Ascending aorta (tissue), 2 donors: ENCODE measurements at regions of chr14 and their contacts with region 1.

Region 1: DNA sequence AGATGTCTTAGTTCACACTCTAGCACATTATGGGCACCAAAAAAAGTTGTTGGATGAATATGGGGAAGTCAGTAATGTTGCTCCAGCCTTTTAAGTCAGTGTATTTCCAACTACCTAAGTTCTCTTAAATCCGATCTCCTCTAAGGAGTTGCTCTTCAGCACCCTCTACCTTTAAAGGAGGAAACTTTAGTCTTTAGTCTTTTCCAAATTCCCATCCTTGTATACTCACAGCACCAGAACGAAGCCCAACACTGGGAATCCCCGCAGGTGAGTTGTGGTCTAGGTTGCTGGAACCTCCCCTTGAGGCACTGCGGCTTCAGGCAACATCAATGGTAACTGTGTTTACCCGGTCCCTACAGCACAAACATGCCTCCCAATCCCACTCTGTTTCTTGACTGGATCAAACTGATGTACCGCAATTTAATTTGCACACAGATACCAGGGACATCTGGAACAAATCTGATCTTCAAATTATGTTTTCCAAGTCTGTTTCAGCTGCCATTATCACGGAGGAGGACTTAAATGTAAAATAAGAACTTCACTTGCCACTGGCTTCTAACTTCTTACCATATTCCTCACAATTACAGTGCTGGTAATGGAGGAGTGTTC is 179.0 kb downstream of the FOXN3 start:
- DNase-seq: no peak
- H3K4me3 ChIP-seq: no peak overlapping the region
- H3K27ac ChIP-seq: peak overlapping the region in 1 of 2 donors; percentile 22
- H3K4me1 ChIP-seq: peaks cover 4 to 19% of the 10 kb centered on the region in 2 donors
- H3K27me3 ChIP-seq: no peaks in the 10 kb centered on the region
- CTCF ChIP-seq: peak; percentile 32 to 56 (median 36)

Region 2: GRCh38 chr14:89198544-89199329 is 39.3 kb before region 1 on chr14:
- intact Hi-C with region 1: no loop called
- DNase-seq: no peak
- H3K4me3 ChIP-seq: no peak overlapping the region
- H3K27ac ChIP-seq: no peak overlapping the region
- H3K4me1 ChIP-seq: peaks cover 0 to 4% of the 10 kb centered on the region in 2 donors
- H3K27me3 ChIP-seq: no peaks in the 10 kb centered on the region
- CTCF ChIP-seq: no peak

Region 3: GRCh38 chr14:89270439-89271227 is 32.6 kb after region 1 on chr14:
- intact Hi-C with region 1: no loop called
- DNase-seq: peak in 1 of 2 donors; percentile 61
- H3K4me3 ChIP-seq: no peak overlapping the region
- H3K27ac ChIP-seq: peak overlapping the region; percentile 82 to 84
- H3K4me1 ChIP-seq: peaks cover 13 to 32% of the 10 kb centered on the region in 2 donors
- H3K27me3 ChIP-seq: no peaks in the 10 kb centered on the region
- CTCF ChIP-seq: no peak

Region 4: GRCh38 chr14:89908712-89909450 is 670.9 kb after region 1 on chr14:
- intact Hi-C with region 1: loop called (anchors 5 kb)
- DNase-seq: no peak
- H3K4me3 ChIP-seq: no peak overlapping the region
- H3K27ac ChIP-seq: no peak overlapping the region
- H3K4me1 ChIP-seq: peaks cover 0 to 23% of the 10 kb centered on the region in 2 donors
- H3K27me3 ChIP-seq: no peaks in the 10 kb centered on the region
- CTCF ChIP-seq: no peak